Naive thymus-derived CD4-positive, alpha-beta T cell (primary cell): ENCODE measurements at regions of chr3 and their contacts with region 1.

Region 1: DNA sequence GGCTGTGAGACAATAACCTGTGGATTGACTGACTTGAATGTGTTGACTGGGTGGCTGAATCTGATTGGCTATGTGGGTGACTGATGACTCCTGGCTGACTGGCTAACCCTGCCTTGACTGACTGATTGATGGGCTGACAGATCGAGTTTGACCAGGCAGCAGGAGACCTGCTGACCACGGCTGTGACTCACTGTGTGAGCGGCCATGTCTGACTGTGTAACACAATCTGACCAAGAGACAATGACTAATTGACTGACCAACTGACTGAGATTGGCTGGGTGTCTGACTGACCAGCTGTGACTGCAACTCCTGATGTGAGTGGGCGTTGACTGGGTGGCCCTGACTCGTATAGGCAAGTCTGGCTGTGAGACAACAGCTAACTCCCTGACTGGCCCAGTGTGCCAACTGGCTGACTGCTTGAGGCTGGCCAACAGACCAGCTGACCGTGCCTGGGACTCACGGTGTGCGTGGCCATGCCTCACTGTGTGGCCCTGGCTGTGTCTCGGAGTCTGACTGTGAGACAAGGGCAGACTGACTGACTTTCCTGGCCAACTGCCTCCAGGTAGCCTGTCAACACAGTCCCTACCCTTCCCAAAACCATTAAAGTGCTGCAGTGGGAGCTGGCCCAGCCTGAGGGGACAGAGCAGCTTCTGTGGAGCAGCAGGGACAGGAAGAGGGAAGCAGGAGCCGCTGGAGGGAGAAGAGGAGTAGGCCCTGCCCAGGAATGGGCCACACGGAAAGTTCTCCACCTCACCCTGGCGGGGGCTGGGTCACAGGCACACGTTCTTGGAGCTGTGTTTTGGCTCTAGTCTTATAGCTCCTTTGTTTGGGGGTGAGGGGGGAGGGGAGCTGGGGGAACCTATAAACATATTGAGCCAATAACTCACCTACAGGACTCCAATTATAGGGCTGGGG is 508.9 kb downstream of the SHQ1 start:
- DNase-seq: no peak
- ATAC-seq: peak; percentile 76
- H3K4me3 ChIP-seq: no peak overlapping the region
- H3K4me3 Mint-ChIP-seq: no peak overlapping the region
- H3K27ac ChIP-seq: no peak overlapping the region
- H3K27ac Mint-ChIP-seq: no peak overlapping the region
- H3K4me1 ChIP-seq: peaks cover 0 to 16% of the 10 kb centered on the region in 2 donors
- H3K4me1 Mint-ChIP-seq: peaks cover 9 to 29% (median 25%) of the 10 kb centered on the region in 7 donors
- H3K27me3 ChIP-seq: no peaks in the 10 kb centered on the region
- H3K27me3 Mint-ChIP-seq: peaks cover 0 to 3% (median 0%) of the 10 kb centered on the region in 5 donors

Region 2: DNA sequence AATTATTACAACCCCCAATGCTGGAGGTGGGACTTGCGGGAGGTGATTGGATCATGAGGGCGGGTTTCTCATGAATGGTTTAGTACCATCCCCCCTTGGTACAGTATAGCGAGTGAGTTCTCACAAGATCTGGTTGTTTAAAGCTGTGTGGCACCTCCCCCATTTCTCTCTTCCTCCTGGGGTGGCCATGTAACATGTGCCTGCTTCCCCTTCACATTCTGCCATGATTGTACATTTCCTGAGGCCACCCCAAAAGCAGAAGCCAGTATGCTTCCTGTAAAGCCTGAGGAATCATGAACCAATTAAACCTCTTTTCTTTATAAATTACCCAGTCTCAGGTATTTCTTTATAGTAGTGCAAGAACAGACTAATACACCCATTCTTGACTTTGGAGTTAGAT is 534.2 kb before region 1 on chr3:
- CTCF ChIA-PET with region 1: no interaction called
- POLR2A ChIA-PET with region 1: no interaction called
- intact Hi-C with region 1: no loop called
- DNase-seq: no peak
- ATAC-seq: peak; percentile 80
- H3K4me3 ChIP-seq: no peak overlapping the region
- H3K4me3 Mint-ChIP-seq: no peak overlapping the region
- H3K27ac ChIP-seq: no peak overlapping the region
- H3K27ac Mint-ChIP-seq: no peak overlapping the region
- H3K4me1 ChIP-seq: no peaks in the 10 kb centered on the region
- H3K4me1 Mint-ChIP-seq: no peaks in the 10 kb centered on the region
- H3K27me3 ChIP-seq: no peaks in the 10 kb centered on the region
- H3K27me3 Mint-ChIP-seq: peaks cover 1 to 21% (median 15%) of the 10 kb centered on the region in 5 donors

Region 3: DNA sequence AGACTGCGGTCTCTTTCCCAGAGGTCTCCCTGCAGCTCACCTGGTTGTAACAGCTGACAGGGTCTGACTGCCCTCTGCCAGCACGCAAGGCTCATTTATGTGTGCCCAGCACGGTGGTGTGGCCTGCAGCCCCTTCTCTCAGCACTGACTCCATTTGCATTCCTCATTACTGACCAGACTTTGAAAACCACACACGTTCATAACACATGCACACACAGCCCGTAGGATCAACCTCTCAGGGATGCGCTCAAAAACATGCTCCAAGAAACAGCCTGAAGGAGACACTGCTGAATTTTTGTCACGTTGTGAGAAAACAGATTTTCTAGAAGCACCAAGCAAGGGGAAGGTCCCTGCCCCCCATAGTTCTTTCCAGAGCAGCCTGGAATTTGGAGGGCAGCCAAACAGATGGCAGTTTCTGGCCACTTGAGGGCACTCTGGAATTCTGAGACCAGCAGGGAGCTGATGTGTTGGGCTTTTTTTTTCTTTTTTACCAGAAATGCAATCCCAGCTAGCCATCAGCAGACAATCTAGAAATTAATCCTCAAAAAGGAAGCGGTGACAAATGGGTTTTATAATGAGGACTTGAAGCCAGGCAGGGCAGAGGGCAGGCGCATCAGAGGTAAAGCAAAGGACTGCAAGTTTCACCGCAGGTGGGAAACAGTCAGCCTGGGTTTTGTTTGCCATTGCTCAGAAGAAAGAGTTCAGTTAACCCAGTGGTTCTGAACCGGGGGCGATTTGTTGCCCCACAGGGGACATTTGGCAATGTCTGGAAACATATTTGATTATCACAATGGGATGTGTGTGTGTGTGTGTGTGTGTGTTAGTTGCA is 383.9 kb before region 1 on chr3:
- CTCF ChIA-PET with region 1: no interaction called
- POLR2A ChIA-PET with region 1: no interaction called
- intact Hi-C with region 1: no loop called
- DNase-seq: peak in 3 of 9 donors; percentile 5 to 27 (median 17)
- ATAC-seq: no peak
- H3K4me3 ChIP-seq: no peak overlapping the region
- H3K4me3 Mint-ChIP-seq: no peak overlapping the region
- H3K27ac ChIP-seq: no peak overlapping the region
- H3K27ac Mint-ChIP-seq: peak overlapping the region in 1 of 9 donors; percentile 28
- H3K4me1 ChIP-seq: no peaks in the 10 kb centered on the region
- H3K4me1 Mint-ChIP-seq: peaks cover 0 to 43% (median 13%) of the 10 kb centered on the region in 7 donors
- H3K27me3 ChIP-seq: no peaks in the 10 kb centered on the region
- H3K27me3 Mint-ChIP-seq: no peaks in the 10 kb centered on the region

Region 4: DNA sequence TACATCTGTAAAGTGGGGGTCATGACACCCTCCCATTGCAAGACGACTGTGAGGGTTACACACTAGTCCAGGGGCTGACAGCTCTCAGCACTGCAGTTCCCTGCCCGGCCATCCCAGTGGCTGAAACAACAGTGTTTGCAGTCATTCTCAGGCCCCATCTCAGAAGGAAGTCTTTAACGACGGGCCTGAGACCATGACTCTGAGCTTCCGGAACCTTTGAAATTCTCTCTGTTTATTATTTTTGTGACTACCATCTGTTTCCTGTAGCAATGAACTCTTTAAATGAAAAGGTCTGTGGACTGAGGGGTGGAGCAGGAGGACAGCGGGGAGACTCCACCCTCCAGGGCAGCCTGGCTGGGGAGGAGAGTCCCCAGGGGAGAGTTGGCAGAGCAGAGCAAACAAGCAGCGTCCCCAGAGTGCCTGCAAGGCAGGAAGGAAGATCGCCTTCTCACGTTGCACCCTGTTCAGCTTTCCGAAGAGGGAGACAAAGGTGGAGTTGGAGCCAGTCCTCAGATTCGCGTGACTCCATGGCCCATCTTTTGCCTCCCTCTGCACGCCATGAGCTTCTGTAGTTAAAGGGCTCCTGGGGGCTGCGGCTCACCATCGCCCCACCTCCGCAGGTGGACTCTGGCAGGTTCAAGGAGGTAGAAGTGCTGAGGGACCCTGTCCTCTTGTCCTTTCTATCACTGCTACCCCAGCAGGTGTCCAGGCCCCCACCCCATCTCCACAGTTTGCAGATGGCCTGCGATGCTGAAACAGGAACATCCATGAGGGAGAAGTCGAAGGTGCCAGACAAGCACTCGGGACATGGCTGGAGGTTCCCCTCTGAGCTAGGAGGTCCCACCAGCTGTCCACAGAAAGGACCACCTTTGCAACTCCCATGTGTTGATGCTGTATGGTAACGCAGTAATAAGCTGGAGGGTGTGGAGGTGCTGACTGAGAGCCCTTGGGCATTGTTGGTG is 28.7 kb before region 1 on chr3:
- CTCF ChIA-PET with region 1: no interaction called
- POLR2A ChIA-PET with region 1: interaction called, 3 read pairs
- intact Hi-C with region 1: loop called in 1 of 2 experiments (anchors 1 kb)
- DNase-seq: peak in 6 of 9 donors; percentile 19 to 34 (median 29)
- ATAC-seq: peak; percentile 85
- H3K4me3 ChIP-seq: no peak overlapping the region
- H3K4me3 Mint-ChIP-seq: peak overlapping the region; percentile 60 to 90 (median 80)
- H3K27ac ChIP-seq: peak overlapping the region; percentile 12
- H3K27ac Mint-ChIP-seq: peak overlapping the region; percentile 87 to 97 (median 93)
- H3K4me1 ChIP-seq: peaks cover 0 to 20% of the 10 kb centered on the region in 2 donors
- H3K4me1 Mint-ChIP-seq: peaks cover 7 to 40% (median 32%) of the 10 kb centered on the region in 7 donors
- H3K27me3 ChIP-seq: no peaks in the 10 kb centered on the region
- H3K27me3 Mint-ChIP-seq: no peaks in the 10 kb centered on the region